ENCODE measurements at regions of chr10 and their contacts with region 1.

Region 1: DNA sequence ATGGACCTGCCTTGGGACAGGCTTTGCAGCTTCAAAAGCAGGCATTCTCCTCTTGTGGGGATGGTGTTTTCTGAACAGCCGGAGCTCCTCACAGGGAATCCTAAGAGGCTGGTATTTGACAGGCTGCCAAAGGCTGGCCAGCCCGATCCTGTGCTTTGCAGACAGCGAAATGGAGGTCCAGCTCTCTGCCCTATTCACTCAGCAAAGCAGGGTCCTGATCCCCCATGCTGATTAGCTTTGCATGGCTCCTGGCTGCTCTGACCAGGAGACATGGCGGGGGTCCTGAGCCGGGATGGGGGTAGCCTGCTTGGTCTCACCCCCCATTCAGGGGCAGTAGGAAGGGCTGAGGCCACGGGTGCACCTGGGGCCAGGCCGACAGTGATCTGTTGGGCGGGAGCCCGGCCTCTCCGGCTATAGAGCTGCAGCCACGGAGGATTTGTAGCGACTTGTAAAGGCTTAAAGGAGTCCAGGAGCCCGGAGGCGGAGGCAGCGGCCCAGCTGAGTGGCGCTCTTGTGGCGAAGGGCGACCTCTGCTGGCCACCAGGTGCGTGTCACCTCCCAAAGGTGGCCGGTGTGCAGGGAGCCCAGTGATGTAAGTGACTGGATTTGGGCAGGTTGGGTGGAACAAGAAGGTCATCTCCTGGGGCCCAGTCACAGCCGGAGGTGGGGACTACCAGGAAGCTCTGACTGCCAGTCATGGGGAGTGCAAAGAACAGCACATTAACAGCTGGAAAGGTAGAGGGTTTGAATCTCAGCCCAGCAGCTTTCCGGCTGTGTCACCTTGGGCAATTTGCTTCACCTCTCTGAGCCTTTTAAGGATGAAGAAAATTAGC is 126.5 kb downstream of the ZMIZ1 start:
- DNase-seq: peak; percentile 91
- ATAC-seq: peak; percentile 90

Region 2: GRCh38 chr10:78047314-78047891 is 1147.9 kb before region 1 on chr10:
- intact Hi-C with region 1: loop called (anchors 5 kb)
- DNase-seq: peak; percentile 95
- ATAC-seq: peak; percentile 85

Region 3: GRCh38 chr10:78211561-78212051 is 983.7 kb before region 1 on chr10:
- intact Hi-C with region 1: loop called (anchors 10 kb)
- DNase-seq: no peak
- ATAC-seq: no peak

Region 4: DNA sequence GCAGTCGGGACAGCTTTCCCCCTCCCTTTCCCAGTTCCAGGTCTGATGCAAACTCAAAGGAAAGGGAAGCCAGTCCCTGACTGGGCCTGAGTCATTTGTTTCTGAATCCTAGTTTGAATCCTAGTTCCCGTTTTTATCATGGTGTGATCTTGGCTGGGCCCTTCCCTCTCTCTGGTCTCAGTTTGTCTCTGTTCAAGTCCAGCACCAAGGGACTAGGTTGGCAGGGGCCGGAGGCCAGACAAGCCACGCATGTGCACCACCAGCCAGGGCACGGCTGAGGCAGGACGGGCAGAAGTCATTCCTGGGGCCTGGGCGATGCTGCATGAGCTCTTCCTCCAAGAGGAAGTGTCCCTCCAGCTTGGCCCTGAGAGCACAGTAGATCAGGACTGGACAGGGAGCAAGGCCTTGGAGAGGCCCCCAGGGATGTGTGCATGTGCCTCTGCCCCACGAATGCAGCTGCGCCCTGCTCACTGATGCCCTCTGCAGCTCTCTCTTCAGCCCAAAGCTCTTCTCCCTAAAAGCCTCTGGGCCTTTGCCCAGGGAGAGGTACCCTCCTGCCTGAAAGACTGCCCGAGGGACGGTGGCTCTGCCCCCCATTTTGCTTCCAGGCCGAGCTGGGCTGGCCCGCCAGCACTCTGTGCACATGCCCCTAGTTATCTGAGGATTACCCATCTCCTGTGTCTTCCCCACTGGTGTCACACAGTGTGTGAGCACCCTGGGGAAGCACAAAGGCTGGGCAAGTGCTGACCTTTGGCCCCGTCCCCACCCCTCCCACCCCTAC is 39.8 kb before region 1 on chr10:
- intact Hi-C with region 1: no loop called
- DNase-seq: no peak
- ATAC-seq: no peak

Measured in sciatic nerve (tissue), 2 donors.